A673 (cell line): ENCODE measurements at regions of chr12 and their contacts with region 1.

Region 1: DNA sequence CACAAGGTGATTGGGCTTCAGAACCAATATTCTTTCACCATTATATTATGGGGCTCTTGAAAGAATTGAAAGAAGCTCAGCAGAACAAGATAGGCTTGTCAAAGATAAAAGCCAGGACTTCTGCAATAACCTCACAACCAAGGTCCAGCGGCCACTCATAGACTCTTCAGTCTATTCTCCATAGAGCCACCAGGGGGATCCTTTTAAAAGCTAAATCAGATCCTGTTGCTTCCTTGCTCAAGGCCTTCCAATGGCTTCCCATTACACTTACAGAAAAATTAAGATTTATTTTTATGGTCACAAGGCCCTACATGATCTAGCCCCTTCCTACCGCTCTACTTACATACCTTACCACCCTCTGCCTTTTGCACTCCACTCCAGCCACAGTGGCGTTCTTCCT is 169.6 kb downstream of the C12orf42 start:
- DNase-seq: peak; percentile 26
- H3K4me3 ChIP-seq: no peak overlapping the region
- H3K27ac ChIP-seq: no peak overlapping the region
- H3K4me1 ChIP-seq: no peaks in the 10 kb centered on the region
- H3K27me3 ChIP-seq: peaks cover 4% of the 10 kb centered on the region
- CTCF ChIP-seq: peak; percentile 48

Region 2: DNA sequence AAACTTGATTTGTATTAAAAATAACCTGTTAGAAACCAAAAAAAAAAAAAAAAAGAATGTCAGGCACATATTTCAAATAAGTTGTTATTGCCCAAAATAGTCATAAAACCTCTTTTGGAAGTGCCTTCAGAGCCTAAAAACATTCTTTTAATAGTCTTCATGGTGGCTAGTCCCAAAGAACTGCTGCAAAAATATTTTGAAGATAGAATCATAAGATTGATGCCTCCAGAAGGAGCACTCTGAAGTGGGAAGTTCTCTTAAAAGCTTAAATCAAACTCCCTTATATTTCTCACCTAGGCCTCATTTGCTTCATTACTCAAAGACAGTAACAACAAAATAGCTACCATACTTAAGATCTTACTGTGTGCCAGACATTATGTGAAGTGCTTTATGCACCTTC is 542.0 kb after region 1 on chr12:
- CTCF ChIA-PET with region 1: interaction called, 11 read pairs
- POLR2A ChIA-PET with region 1: no interaction called
- intact Hi-C with region 1: no loop called
- DNase-seq: no peak
- H3K4me3 ChIP-seq: no peak overlapping the region
- H3K27ac ChIP-seq: no peak overlapping the region
- H3K4me1 ChIP-seq: no peaks in the 10 kb centered on the region
- H3K27me3 ChIP-seq: peaks cover 3% of the 10 kb centered on the region
- CTCF ChIP-seq: no peak